SK-N-SH (cell line): ENCODE measurements at regions of chr17 and their contacts with region 1.

Region 1: DNA sequence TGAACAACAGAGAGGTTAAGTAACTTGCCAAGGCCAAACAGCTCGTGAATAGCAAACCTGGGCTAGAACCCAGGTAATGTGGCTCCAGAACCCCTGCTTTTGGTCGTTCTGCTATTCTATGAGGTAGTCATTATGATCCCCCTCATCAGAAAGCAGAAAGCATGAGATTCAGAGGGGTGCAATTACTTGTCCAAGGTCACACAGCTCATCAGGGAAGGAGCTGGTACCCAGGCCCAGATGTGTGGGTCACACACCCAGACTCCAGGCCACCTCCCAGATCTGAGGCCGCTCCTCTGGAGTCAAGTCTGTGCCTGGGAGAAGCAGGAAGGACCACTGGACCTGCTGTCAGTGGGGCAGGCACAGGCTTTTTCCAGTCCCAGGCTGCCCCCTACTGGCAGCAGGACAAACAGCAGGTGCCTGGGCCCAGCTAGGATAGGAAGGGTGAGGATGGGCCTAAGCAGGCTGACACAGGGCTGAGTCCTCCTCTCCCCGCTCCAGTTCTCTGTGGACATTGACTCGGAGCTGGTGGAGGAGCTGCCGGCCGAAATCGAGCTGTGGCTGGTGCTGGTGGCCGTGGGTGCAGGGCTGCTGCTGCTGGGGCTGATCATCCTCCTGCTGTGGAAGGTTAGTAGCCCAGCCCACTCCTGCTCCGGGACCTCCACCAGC is 7.8 kb upstream of the PDK2 start:
- DNase-seq: peak; percentile 97
- H3K4me3 ChIP-seq: no peak overlapping the region; a peak in 1 of 4 replicates
- H3K27ac ChIP-seq: peak overlapping the region in 1 of 2 experiments; percentile 32; a peak in 1 of 4 replicates
- H3K4me1 ChIP-seq: no peaks in the 10 kb centered on the region
- H3K27me3 ChIP-seq: no peaks in the 10 kb centered on the region
- CTCF ChIP-seq: peak; percentile 99
- EP300 ChIP-seq: no peak
- RAD21 ChIP-seq: peak; percentile 98

Region 2: GRCh38 chr17:49861150-49861892 is 226.1 kb before region 1 on chr17:
- CTCF ChIA-PET with region 1: interaction called, 10 read pairs
- POLR2A ChIA-PET with region 1: no interaction called
- DNase-seq: peak; percentile 93
- H3K4me3 ChIP-seq: no peak overlapping the region
- H3K27ac ChIP-seq: no peak overlapping the region
- H3K4me1 ChIP-seq: no peaks in the 10 kb centered on the region
- H3K27me3 ChIP-seq: peaks cover 6% of the 10 kb centered on the region; the same call in 1 of the 2 replicates
- CTCF ChIP-seq: peak; percentile 85
- EP300 ChIP-seq: no peak
- RAD21 ChIP-seq: peak; percentile 84

Region 3: DNA sequence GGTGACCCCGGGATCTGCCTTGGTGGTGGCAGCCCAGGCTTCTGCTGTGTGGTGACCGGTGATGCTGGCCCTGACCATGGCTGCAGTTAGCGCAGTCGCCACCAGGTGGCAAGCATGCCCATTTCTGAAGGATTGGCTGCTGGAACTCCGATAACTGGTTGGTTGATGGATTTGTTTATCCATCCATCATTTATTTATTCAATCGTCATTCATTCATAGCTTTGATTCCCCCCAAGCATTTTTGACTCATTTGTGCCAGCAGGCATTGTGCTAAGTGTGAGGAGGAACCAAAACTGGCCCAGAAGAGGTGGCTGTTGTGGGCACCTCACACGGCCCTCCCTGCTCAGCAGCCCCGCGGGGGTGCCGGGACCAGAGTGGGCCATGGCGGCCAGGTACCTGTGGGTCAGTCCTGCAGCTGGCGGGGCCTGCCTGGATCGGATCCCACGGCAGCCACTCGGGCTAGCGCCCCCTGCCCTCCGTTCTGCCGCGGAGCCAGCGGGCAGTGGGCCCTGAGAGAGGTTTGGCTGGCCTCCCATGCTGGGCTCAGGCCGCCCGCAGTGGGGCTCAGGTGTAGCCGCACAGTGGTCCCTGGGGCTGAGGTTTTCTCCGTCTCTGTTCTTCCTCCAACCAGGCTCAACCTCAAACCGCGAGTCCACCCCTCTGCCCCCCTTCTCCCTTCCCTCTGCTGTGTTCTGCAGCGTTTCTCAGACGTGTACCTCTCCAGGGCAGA is 60.3 kb before region 1 on chr17:
- CTCF ChIA-PET with region 1: interaction called, 353 read pairs
- POLR2A ChIA-PET with region 1: no interaction called
- DNase-seq: peak; percentile 93
- H3K4me3 ChIP-seq: peak overlapping the region; percentile 46 to 71
- H3K27ac ChIP-seq: peak overlapping the region; percentile 74 to 99; a peak in 3 of 4 replicates
- H3K4me1 ChIP-seq: peaks cover 16 to 21% of the 10 kb centered on the region in 2 experiments; a peak in 3 of 4 replicates
- H3K27me3 ChIP-seq: no peaks in the 10 kb centered on the region
- CTCF ChIP-seq: peak; percentile 100
- EP300 ChIP-seq: no peak; a peak in 1 of 4 replicates
- RAD21 ChIP-seq: peak; percentile 95

Region 4: GRCh38 chr17:50064258-50065001 is 22.9 kb before region 1 on chr17:
- CTCF ChIA-PET with region 1: interaction called, 51 read pairs
- POLR2A ChIA-PET with region 1: no interaction called
- DNase-seq: peak; percentile 64
- H3K4me3 ChIP-seq: no peak overlapping the region
- H3K27ac ChIP-seq: peak overlapping the region; percentile 77 to 100
- H3K4me1 ChIP-seq: peaks cover 44 to 64% of the 10 kb centered on the region in 2 experiments
- H3K27me3 ChIP-seq: no peaks in the 10 kb centered on the region
- CTCF ChIP-seq: no peak
- EP300 ChIP-seq: peak in 1 of 2 experiments; percentile 89; a peak in 2 of 4 replicates
- RAD21 ChIP-seq: no peak

Region 5: GRCh38 chr17:50114849-50115357 is 27.5 kb after region 1 on chr17:
- CTCF ChIA-PET with region 1: interaction called, 297 read pairs
- POLR2A ChIA-PET with region 1: no interaction called
- DNase-seq: peak; percentile 79
- H3K4me3 ChIP-seq: no peak overlapping the region
- H3K27ac ChIP-seq: no peak overlapping the region
- H3K4me1 ChIP-seq: peaks cover 0 to 24% of the 10 kb centered on the region in 2 experiments; a peak in 1 of 4 replicates
- H3K27me3 ChIP-seq: no peaks in the 10 kb centered on the region
- CTCF ChIP-seq: peak; percentile 93
- EP300 ChIP-seq: no peak
- RAD21 ChIP-seq: peak; percentile 75

Region 6: GRCh38 chr17:50161023-50161910 is 73.9 kb after region 1 on chr17:
- CTCF ChIA-PET with region 1: interaction called, 63 read pairs
- POLR2A ChIA-PET with region 1: interaction called, 8 read pairs
- DNase-seq: peak; percentile 100
- H3K4me3 ChIP-seq: peak overlapping the region; percentile 60 to 72
- H3K27ac ChIP-seq: peak overlapping the region; percentile 3 to 91; a peak in 3 of 4 replicates
- H3K4me1 ChIP-seq: peaks cover 3 to 10% of the 10 kb centered on the region in 2 experiments; a peak in 1 of 4 replicates
- H3K27me3 ChIP-seq: no peaks in the 10 kb centered on the region
- CTCF ChIP-seq: peak; percentile 97
- EP300 ChIP-seq: peak in 1 of 2 experiments; percentile 44; a peak in 1 of 4 replicates
- RAD21 ChIP-seq: peak; percentile 72